Breast epithelium (tissue), 4 donors: ENCODE measurements at regions of chr14 and their contacts with region 1.

Region 1: GRCh38 chr14:89416002-89416995 is 734 bp downstream of the FOXN3 start:
- DNase-seq: peak; percentile 98 to 99
- H3K4me3 ChIP-seq: peak overlapping the region; percentile 90 to 99 (median 99)
- H3K27ac ChIP-seq: peak overlapping the region; percentile 94 to 100
- H3K4me1 ChIP-seq: no peaks in the 10 kb centered on the region
- H3K27me3 ChIP-seq: no peaks in the 10 kb centered on the region
- CTCF ChIP-seq: no peak
- POLR2A ChIP-seq: peak; percentile 45

Region 2: DNA sequence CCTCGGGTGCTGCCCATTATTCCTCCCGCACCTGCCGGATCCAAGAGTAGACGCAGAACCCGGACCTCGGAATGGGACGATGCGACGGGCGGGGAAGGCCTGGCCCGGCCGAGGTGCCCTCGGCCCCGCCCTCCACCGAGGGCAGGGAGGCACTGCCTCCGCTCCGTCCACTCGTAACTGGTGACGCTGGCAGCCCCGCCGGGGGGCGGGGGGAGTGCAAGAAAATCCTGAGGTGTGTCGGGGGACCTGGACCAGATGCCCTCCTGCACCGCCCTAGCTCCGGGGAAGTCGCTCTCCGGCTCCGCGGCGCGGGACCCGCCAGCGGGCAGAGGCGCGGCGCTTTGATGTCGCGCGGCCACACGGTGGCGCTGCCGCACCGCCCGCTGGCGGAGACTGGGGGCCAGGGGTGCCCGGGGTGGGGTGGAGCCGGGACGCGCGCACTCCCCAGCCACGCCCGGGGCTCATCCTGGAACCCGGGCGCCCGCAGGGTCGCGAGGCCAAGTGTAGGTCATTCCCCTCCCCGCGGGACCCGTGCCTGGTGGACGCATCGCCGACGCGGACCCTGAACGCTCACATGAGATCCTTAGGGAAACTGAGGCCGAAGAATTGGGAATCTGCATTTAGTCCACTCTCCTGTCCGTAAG is 389.1 kb before region 1 on chr14:
- intact Hi-C with region 1: loop called (anchors 5 kb)
- DNase-seq: peak in 1 of 2 donors; percentile 60
- H3K4me3 ChIP-seq: peak overlapping the region; percentile 38 to 73 (median 52)
- H3K27ac ChIP-seq: no peak overlapping the region
- H3K4me1 ChIP-seq: peaks cover 6% of the 10 kb centered on the region in 2 donors
- H3K27me3 ChIP-seq: peaks cover 0 to 7% of the 10 kb centered on the region in 2 donors
- CTCF ChIP-seq: peak; percentile 8 to 93 (median 63)
- POLR2A ChIP-seq: no peak